ENCODE measurements at regions of chr7 and their contacts with region 1.

Region 1: DNA sequence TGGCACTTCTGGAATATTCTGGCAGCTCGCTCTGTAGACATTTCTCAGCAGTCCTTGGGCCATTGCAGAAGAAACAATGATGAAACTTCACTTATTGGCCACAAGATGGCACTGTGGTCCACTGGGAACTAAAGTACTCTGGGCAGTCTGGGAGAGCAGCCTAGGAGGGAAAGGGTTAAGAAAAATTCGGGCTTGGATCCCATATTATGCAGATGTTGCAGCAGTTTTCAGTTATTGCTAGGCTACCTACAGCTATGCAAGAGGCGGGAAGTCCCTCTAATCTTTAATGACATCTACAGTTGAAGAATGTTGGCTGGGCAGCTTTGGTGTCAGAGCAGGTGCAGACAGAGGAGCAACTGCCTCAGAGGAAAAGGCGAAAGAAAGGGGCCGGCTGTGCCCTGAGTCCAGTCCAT is 201.7 kb upstream of the PRSS58 start:
- DNase-seq: peak in 3 of 9 experiments; percentile 25 to 69 (median 56)
- ATAC-seq: peak; percentile 52
- H3K4me3 ChIP-seq: no peak overlapping the region
- H3K4me3 Mint-ChIP-seq: peak overlapping the region; percentile 27
- H3K27ac ChIP-seq: no peak overlapping the region
- H3K27ac Mint-ChIP-seq: peak overlapping the region; percentile 41
- H3K4me1 ChIP-seq: peaks cover 33% of the 10 kb centered on the region
- H3K4me1 Mint-ChIP-seq: peaks cover 55% of the 10 kb centered on the region
- H3K27me3 ChIP-seq: no peaks in the 10 kb centered on the region
- H3K27me3 Mint-ChIP-seq: no peaks in the 10 kb centered on the region
- CTCF ChIP-seq: peak; percentile 52

Region 2: GRCh38 chr7:142407939-142408570 is 51.5 kb before region 1 on chr7:
- CTCF ChIA-PET with region 1: no interaction called
- POLR2A ChIA-PET with region 1: no interaction called
- intact Hi-C with region 1: no loop called
- DNase-seq: no peak
- ATAC-seq: no peak
- H3K4me3 ChIP-seq: no peak overlapping the region
- H3K4me3 Mint-ChIP-seq: no peak overlapping the region
- H3K27ac ChIP-seq: no peak overlapping the region
- H3K27ac Mint-ChIP-seq: no peak overlapping the region
- H3K4me1 ChIP-seq: no peaks in the 10 kb centered on the region
- H3K4me1 Mint-ChIP-seq: peaks cover 3% of the 10 kb centered on the region
- H3K27me3 ChIP-seq: no peaks in the 10 kb centered on the region
- H3K27me3 Mint-ChIP-seq: no peaks in the 10 kb centered on the region
- CTCF ChIP-seq: no peak

Region 3: GRCh38 chr7:142438235-142438922 is 21.2 kb before region 1 on chr7:
- CTCF ChIA-PET with region 1: interaction called, 12 read pairs
- POLR2A ChIA-PET with region 1: no interaction called
- intact Hi-C with region 1: no loop called
- DNase-seq: peak in 2 of 9 experiments; percentile 44 to 58
- ATAC-seq: no peak
- H3K4me3 ChIP-seq: no peak overlapping the region
- H3K4me3 Mint-ChIP-seq: no peak overlapping the region
- H3K27ac ChIP-seq: no peak overlapping the region
- H3K27ac Mint-ChIP-seq: no peak overlapping the region
- H3K4me1 ChIP-seq: peaks cover 12% of the 10 kb centered on the region
- H3K4me1 Mint-ChIP-seq: peaks cover 50% of the 10 kb centered on the region
- H3K27me3 ChIP-seq: no peaks in the 10 kb centered on the region
- H3K27me3 Mint-ChIP-seq: no peaks in the 10 kb centered on the region
- CTCF ChIP-seq: peak; percentile 42

Region 4: GRCh38 chr7:142488036-142488633 is 28.6 kb after region 1 on chr7:
- CTCF ChIA-PET with region 1: interaction called, 378 read pairs
- POLR2A ChIA-PET with region 1: interaction called, 17 read pairs
- intact Hi-C with region 1: loop called in 1 of 2 experiments (anchors 1 kb)
- DNase-seq: no peak
- ATAC-seq: no peak
- H3K4me3 ChIP-seq: no peak overlapping the region
- H3K4me3 Mint-ChIP-seq: no peak overlapping the region
- H3K27ac ChIP-seq: no peak overlapping the region
- H3K27ac Mint-ChIP-seq: peak overlapping the region; percentile 52
- H3K4me1 ChIP-seq: peaks cover 15% of the 10 kb centered on the region
- H3K4me1 Mint-ChIP-seq: peaks cover 46% of the 10 kb centered on the region
- H3K27me3 ChIP-seq: no peaks in the 10 kb centered on the region
- H3K27me3 Mint-ChIP-seq: no peaks in the 10 kb centered on the region
- CTCF ChIP-seq: no peak

Region 5: DNA sequence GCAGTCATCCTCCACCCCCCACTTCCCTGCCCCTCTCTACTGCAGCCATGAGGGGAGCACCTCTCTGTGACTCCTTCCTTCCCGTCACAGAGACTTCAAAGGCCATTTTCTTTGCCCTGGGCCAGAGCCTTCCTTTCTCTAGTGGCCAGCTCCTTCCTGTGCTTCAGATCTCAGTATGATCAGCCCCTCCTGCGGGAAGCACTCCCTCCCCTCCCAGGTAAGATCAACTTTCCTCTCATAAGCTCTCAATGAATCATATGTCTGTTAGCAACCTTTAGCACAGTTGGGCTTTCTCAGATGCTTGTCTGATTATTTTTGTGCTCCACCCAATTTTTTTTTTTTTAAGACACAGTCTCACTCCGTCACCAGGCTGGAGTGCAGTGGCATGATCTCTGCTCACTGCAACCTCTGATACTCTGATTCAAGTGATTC is 48.7 kb after region 1 on chr7:
- CTCF ChIA-PET with region 1: interaction called, 10 read pairs
- POLR2A ChIA-PET with region 1: no interaction called
- intact Hi-C with region 1: no loop called
- DNase-seq: peak in 5 of 9 experiments; percentile 16 to 51 (median 29)
- ATAC-seq: peak; percentile 76
- H3K4me3 ChIP-seq: no peak overlapping the region
- H3K4me3 Mint-ChIP-seq: peak overlapping the region; percentile 26
- H3K27ac ChIP-seq: no peak overlapping the region
- H3K27ac Mint-ChIP-seq: peak overlapping the region; percentile 81
- H3K4me1 ChIP-seq: peaks cover 31% of the 10 kb centered on the region
- H3K4me1 Mint-ChIP-seq: peaks cover 37% of the 10 kb centered on the region
- H3K27me3 ChIP-seq: no peaks in the 10 kb centered on the region
- H3K27me3 Mint-ChIP-seq: no peaks in the 10 kb centered on the region
- CTCF ChIP-seq: no peak

Region 6: DNA sequence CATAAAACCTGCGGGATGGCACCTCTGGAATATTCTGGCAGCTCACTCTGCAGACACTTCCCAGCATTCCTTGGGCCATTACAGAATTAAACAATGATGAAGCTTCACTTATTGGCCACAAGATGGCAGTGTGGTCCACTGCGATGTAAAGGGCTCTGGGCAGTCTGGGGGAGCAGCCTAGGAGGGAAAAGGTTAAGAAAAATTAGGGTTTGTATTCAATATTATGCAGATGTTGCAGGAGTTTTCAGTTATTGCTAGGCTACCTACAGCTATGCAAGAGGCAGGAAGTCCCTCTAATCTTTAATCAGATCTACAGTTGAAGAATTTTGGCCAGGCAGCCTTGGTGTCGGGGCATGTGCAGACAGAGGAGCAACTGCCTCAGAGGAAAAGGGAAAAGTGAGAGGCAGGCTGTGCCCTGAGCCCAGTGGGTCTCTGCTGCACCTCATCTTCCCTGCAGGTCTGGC is 56.5 kb after region 1 on chr7:
- CTCF ChIA-PET with region 1: interaction called, 38 read pairs
- POLR2A ChIA-PET with region 1: no interaction called
- intact Hi-C with region 1: loop called in 1 of 2 experiments (anchors 2 kb)
- DNase-seq: peak in 4 of 9 experiments; percentile 26 to 75 (median 46)
- ATAC-seq: peak; percentile 68
- H3K4me3 ChIP-seq: no peak overlapping the region
- H3K4me3 Mint-ChIP-seq: no peak overlapping the region
- H3K27ac ChIP-seq: no peak overlapping the region
- H3K27ac Mint-ChIP-seq: no peak overlapping the region
- H3K4me1 ChIP-seq: peaks cover 25% of the 10 kb centered on the region
- H3K4me1 Mint-ChIP-seq: peaks cover 48% of the 10 kb centered on the region
- H3K27me3 ChIP-seq: no peaks in the 10 kb centered on the region
- H3K27me3 Mint-ChIP-seq: no peaks in the 10 kb centered on the region
- CTCF ChIP-seq: peak; percentile 66

Region 7: DNA sequence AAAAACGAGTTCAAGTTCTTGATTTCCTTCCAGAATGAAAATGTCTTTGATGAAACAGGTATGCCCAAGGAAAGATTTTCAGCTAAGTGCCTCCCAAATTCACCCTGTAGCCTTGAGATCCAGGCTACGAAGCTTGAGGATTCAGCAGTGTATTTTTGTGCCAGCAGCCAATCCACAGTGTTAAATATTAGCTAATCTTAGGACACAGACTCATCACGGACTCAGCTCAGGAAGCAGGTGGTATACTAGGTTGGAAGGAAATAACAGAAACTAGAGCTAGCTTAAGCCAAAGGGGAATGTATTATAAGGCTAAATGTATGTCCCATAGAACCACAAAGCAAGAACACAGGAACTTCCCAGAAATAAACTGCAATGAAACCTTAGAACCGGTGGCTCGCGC is 138.7 kb after region 1 on chr7:
- CTCF ChIA-PET with region 1: no interaction called
- POLR2A ChIA-PET with region 1: no interaction called
- intact Hi-C with region 1: no loop called
- DNase-seq: no peak
- ATAC-seq: no peak
- H3K4me3 ChIP-seq: no peak overlapping the region
- H3K4me3 Mint-ChIP-seq: no peak overlapping the region
- H3K27ac ChIP-seq: no peak overlapping the region
- H3K27ac Mint-ChIP-seq: no peak overlapping the region
- H3K4me1 ChIP-seq: no peaks in the 10 kb centered on the region
- H3K4me1 Mint-ChIP-seq: no peaks in the 10 kb centered on the region
- H3K27me3 ChIP-seq: no peaks in the 10 kb centered on the region
- H3K27me3 Mint-ChIP-seq: no peaks in the 10 kb centered on the region
- CTCF ChIP-seq: no peak

Region 8: GRCh38 chr7:142711746-142712619 is 252.4 kb after region 1 on chr7:
- CTCF ChIA-PET with region 1: no interaction called
- POLR2A ChIA-PET with region 1: no interaction called
- intact Hi-C with region 1: no loop called
- DNase-seq: peak in 6 of 9 experiments; percentile 26 to 74 (median 46)
- ATAC-seq: peak; percentile 76
- H3K4me3 ChIP-seq: peak overlapping the region; percentile 42 to 64
- H3K4me3 Mint-ChIP-seq: peak overlapping the region; percentile 89
- H3K27ac ChIP-seq: peak overlapping the region; percentile 56 to 70
- H3K27ac Mint-ChIP-seq: peak overlapping the region; percentile 95
- H3K4me1 ChIP-seq: peaks cover 46% of the 10 kb centered on the region
- H3K4me1 Mint-ChIP-seq: peaks cover 58% of the 10 kb centered on the region
- H3K27me3 ChIP-seq: no peaks in the 10 kb centered on the region
- H3K27me3 Mint-ChIP-seq: no peaks in the 10 kb centered on the region
- CTCF ChIP-seq: peak; percentile 38

Measured in CD8-positive, alpha-beta T cell (primary cell).